ENCODE measurements at regions of chr4 and their contacts with region 1.

Region 1: GRCh38 chr4:147866532-147867271 is 134.8 kb downstream of the ARHGAP10 start:
- DNase-seq: peak; percentile 96
- ATAC-seq: peak; percentile 92
- H3K4me3 Mint-ChIP-seq: no peak overlapping the region
- H3K27ac Mint-ChIP-seq: no peak overlapping the region
- H3K4me1 Mint-ChIP-seq: no peaks in the 10 kb centered on the region
- H3K27me3 Mint-ChIP-seq: no peaks in the 10 kb centered on the region

Region 2: GRCh38 chr4:147160908-147161513 is 705.7 kb before region 1 on chr4:
- CTCF ChIA-PET with region 1: interaction called, 5 read pairs
- POLR2A ChIA-PET with region 1: no interaction called
- intact Hi-C with region 1: loop called in 1 of 2 experiments (anchors 2 kb)
- DNase-seq: peak; percentile 17
- ATAC-seq: no peak
- H3K4me3 Mint-ChIP-seq: no peak overlapping the region
- H3K27ac Mint-ChIP-seq: no peak overlapping the region
- H3K4me1 Mint-ChIP-seq: peaks cover 2% of the 10 kb centered on the region
- H3K27me3 Mint-ChIP-seq: peaks cover 34% of the 10 kb centered on the region

Region 3: GRCh38 chr4:147596981-147597380 is 269.7 kb before region 1 on chr4:
- CTCF ChIA-PET with region 1: interaction called, 21 read pairs
- POLR2A ChIA-PET with region 1: no interaction called
- intact Hi-C with region 1: loop called in 1 of 2 experiments (anchors 5 kb)
- DNase-seq: no peak
- ATAC-seq: no peak
- H3K4me3 Mint-ChIP-seq: no peak overlapping the region
- H3K27ac Mint-ChIP-seq: no peak overlapping the region
- H3K4me1 Mint-ChIP-seq: no peaks in the 10 kb centered on the region
- H3K27me3 Mint-ChIP-seq: no peaks in the 10 kb centered on the region

Region 4: GRCh38 chr4:147683717-147684700 is 182.7 kb before region 1 on chr4 and contains the start of gene PRMT9:
- CTCF ChIA-PET with region 1: interaction called, 40 read pairs
- POLR2A ChIA-PET with region 1: no interaction called
- intact Hi-C with region 1: loop called in 1 of 2 experiments (anchors 2 kb)
- DNase-seq: peak; percentile 93
- ATAC-seq: peak; percentile 99
- H3K4me3 Mint-ChIP-seq: peak within 1 kb of the TSS; percentile 92
- H3K27ac Mint-ChIP-seq: peak within 1 kb of the TSS; percentile 91
- H3K4me1 Mint-ChIP-seq: peaks cover 25% of the 10 kb centered on the region
- H3K27me3 Mint-ChIP-seq: peaks cover 6% of the 10 kb centered on the region
- total RNA-seq, gene PRMT9: 6.2 to 7.5 TPM

Region 5: GRCh38 chr4:147714575-147715401 is 151.9 kb before region 1 on chr4:
- CTCF ChIA-PET with region 1: interaction called, 76 read pairs
- POLR2A ChIA-PET with region 1: no interaction called
- intact Hi-C with region 1: no loop called
- DNase-seq: no peak
- ATAC-seq: no peak
- H3K4me3 Mint-ChIP-seq: no peak overlapping the region
- H3K27ac Mint-ChIP-seq: no peak overlapping the region
- H3K4me1 Mint-ChIP-seq: peaks cover 3% of the 10 kb centered on the region
- H3K27me3 Mint-ChIP-seq: peaks cover 10% of the 10 kb centered on the region

Region 6: DNA sequence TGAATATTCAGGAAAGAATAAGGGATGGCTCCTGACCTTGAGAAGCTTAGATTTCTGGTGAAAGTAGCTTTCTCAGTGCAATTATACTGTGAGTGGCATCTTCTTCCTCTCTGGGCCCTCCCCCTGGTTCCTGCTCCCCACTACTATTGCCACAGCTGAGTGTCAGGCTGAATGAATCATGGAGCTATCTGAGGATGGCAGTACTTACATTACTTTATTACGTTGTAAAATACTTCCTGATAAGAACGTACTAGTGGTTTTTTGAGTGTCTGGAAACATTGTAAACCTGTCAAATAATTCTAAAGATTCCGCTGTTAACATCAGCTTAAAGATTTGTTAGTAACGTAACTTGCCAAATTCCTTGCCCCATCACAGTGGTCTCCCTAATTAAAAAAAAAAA is 98.6 kb before region 1 on chr4:
- CTCF ChIA-PET with region 1: interaction called, 14 read pairs
- POLR2A ChIA-PET with region 1: no interaction called
- intact Hi-C with region 1: no loop called
- DNase-seq: peak; percentile 42
- ATAC-seq: peak; percentile 72
- H3K4me3 Mint-ChIP-seq: no peak overlapping the region
- H3K27ac Mint-ChIP-seq: no peak overlapping the region
- H3K4me1 Mint-ChIP-seq: peaks cover 20% of the 10 kb centered on the region
- H3K27me3 Mint-ChIP-seq: no peaks in the 10 kb centered on the region

Region 7: DNA sequence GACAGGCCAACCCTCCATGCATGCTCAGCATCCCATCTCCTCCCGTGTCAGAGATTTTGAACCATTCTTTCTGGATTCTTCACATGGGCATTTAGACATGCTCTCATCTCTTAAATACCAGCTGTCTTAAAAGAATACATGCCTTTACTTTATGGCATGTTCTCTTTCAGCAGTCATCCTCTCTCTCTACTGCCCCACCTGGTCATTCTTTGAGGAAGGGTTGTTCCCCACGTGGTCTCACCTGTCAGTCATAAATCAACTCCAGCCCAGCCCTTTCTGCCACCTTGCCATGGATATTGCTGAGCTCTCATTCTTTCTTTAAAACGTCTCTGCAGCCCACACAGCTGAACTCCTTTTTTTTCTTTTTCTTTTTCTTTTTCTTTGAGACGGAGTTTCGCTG is 23.5 kb before region 1 on chr4:
- CTCF ChIA-PET with region 1: interaction called, 39 read pairs
- POLR2A ChIA-PET with region 1: no interaction called
- intact Hi-C with region 1: no loop called
- DNase-seq: peak; percentile 29
- ATAC-seq: peak; percentile 74
- H3K4me3 Mint-ChIP-seq: no peak overlapping the region
- H3K27ac Mint-ChIP-seq: no peak overlapping the region
- H3K4me1 Mint-ChIP-seq: no peaks in the 10 kb centered on the region
- H3K27me3 Mint-ChIP-seq: no peaks in the 10 kb centered on the region

Measured in activated CD4-positive, alpha-beta T cell treated with anti-CD3 and anti-CD28 coated beads for 36 hours (primary cell).